Gastrocnemius medialis (tissue), 4 donors: ENCODE measurements at regions of chr2 and their contacts with region 1.

Region 1: DNA sequence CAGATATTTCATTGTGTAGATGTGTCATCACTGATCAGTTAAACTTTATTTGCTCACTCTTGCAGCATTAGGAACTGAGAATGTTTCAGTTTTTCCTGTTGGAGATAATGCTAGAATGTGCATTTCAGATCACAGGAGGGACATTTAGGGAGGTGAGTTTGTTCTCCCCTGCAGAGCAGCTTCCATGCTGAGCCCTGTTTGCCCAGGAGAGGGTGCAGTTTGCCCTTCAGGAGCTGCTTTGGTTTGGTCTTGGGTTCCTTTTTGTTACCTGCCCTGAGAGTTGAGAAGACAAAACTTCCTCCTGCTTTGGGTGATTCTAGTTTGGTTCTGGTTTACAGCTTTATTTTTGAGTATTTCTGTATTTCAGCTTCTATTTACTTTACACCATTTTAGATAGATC is 49.9 kb downstream of the DGKD start:
- DNase-seq: peak in 1 of 2 donors; percentile 58
- ATAC-seq: peak; percentile 69 to 88
- H3K4me3 ChIP-seq: no peak overlapping the region
- H3K27ac ChIP-seq: no peak overlapping the region
- H3K4me1 ChIP-seq: peaks cover 0 to 3% of the 10 kb centered on the region in 2 donors
- H3K27me3 ChIP-seq: no peaks in the 10 kb centered on the region
- CTCF ChIP-seq: peak; percentile 73 to 84 (median 75)
- POLR2A ChIP-seq: no peak

Region 2: DNA sequence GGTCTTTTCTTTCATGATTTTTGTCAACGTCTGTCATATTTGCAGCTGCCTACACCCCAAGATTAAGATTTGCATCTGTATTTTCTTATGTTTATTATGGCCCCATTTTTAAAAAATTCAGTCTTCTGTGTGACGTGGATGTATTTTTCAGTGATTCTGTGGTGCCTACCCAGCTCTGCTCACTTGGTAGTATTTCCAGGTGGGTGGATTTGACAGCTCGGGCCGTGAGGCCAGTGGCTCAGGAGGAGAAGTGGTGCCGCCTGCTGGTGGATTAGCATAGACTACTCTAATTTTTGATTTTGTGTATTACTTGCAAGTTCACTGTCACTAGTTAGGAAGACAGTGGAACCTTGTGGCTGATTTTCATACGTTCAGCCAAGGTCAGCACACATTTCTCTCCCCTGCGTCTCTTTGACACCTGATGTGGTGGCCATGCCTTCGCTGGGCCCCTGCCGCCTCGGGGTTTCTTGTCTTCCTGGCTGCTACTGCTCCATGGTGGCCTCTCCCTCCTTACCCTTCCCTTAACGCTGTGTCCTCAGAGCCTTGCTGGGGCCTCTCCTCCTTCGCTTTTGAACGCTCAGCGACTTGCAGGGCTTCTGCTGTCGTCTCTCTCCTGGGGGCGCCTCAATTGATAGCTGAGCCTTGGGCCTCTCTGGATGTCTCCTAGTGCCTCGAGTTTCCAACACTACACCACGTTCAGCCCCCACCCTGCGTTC is 39.4 kb after region 1 on chr2:
- in situ Hi-C with region 1: loop called in 2 of 4 experiments (anchors 5 kb)
- intact Hi-C with region 1: loop called (anchors 1 kb)
- DNase-seq: peak; percentile 74 to 80
- ATAC-seq: peak; percentile 79
- H3K4me3 ChIP-seq: no peak overlapping the region
- H3K27ac ChIP-seq: peak overlapping the region; percentile 46 to 96 (median 67)
- H3K4me1 ChIP-seq: peaks cover 12 to 47% of the 10 kb centered on the region in 2 donors
- H3K27me3 ChIP-seq: no peaks in the 10 kb centered on the region
- CTCF ChIP-seq: peak; percentile 85 to 90 (median 89)
- POLR2A ChIP-seq: no peak

Region 3: GRCh38 chr2:233449081-233449901 is 45.1 kb after region 1 on chr2:
- in situ Hi-C with region 1: loop called in 2 of 4 experiments (anchors 5 kb)
- intact Hi-C with region 1: loop called (anchors 1 kb)
- DNase-seq: peak in 1 of 2 donors; percentile 24
- ATAC-seq: peak in 1 of 2 donors; percentile 18
- H3K4me3 ChIP-seq: no peak overlapping the region
- H3K27ac ChIP-seq: peak overlapping the region in 1 of 4 donors; percentile 52
- H3K4me1 ChIP-seq: no peaks in the 10 kb centered on the region
- H3K27me3 ChIP-seq: no peaks in the 10 kb centered on the region
- CTCF ChIP-seq: peak in 2 of 5 experiments; percentile 8 to 35
- POLR2A ChIP-seq: no peak

Region 4: GRCh38 chr2:233643128-233643527 is 238.9 kb after region 1 on chr2:
- in situ Hi-C with region 1: no loop called
- intact Hi-C with region 1: no loop called
- DNase-seq: no peak
- ATAC-seq: no peak
- H3K4me3 ChIP-seq: no peak overlapping the region
- H3K27ac ChIP-seq: no peak overlapping the region
- H3K4me1 ChIP-seq: no peaks in the 10 kb centered on the region
- H3K27me3 ChIP-seq: no peaks in the 10 kb centered on the region
- CTCF ChIP-seq: no peak
- POLR2A ChIP-seq: no peak